H1 (cell line): ENCODE measurements at regions of chr3 and their contacts with region 1.

Region 1: DNA sequence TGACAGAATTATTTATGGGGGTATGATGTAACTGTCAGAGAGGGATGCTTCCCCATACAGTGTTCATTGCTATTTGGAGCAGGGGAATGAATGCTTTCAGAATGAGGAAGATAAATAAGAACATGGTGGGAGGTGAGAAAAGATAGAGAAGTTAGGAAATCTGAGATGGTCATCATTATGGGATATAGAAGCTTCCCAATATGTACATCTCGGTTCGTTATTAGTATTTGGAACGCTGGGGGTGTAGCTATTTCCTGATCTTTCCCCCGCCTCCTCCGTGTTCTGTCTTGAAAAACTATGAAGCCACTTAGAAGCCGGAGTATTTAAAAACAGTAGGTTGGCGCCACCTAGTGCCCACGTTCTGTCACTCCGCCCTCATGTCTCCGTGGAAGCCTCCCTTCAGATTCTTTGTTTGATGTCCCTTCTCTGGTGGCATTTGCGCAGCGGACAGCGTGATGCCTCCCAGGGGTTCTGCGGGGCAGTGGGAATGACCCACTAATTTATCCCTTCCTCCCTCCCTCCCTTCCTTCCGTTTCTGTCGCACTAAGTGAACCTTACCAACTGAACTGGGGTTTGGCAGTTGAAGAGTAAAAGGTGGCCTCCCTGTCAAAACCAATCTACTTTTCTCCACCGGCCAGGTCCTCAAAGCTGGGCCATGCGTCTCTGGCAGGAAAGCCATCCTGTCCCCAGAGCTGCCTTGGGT is 184.5 kb downstream of the FEZF2 start:
- DNase-seq: peak; percentile 41 to 82
- H3K4me3 ChIP-seq: no peak overlapping the region
- H3K27ac ChIP-seq: no peak overlapping the region
- H3K4me1 ChIP-seq: peaks cover 0 to 5% (median 3%) of the 10 kb centered on the region in 4 experiments; a peak in 4 of 7 replicates
- H3K27me3 ChIP-seq: no peaks in the 10 kb centered on the region
- CTCF ChIP-seq: peak; percentile 73 to 84 (median 75)
- EP300 ChIP-seq: no peak
- POLR2A ChIP-seq: no peak
- RAD21 ChIP-seq: peak; percentile 85 to 90

Region 2: DNA sequence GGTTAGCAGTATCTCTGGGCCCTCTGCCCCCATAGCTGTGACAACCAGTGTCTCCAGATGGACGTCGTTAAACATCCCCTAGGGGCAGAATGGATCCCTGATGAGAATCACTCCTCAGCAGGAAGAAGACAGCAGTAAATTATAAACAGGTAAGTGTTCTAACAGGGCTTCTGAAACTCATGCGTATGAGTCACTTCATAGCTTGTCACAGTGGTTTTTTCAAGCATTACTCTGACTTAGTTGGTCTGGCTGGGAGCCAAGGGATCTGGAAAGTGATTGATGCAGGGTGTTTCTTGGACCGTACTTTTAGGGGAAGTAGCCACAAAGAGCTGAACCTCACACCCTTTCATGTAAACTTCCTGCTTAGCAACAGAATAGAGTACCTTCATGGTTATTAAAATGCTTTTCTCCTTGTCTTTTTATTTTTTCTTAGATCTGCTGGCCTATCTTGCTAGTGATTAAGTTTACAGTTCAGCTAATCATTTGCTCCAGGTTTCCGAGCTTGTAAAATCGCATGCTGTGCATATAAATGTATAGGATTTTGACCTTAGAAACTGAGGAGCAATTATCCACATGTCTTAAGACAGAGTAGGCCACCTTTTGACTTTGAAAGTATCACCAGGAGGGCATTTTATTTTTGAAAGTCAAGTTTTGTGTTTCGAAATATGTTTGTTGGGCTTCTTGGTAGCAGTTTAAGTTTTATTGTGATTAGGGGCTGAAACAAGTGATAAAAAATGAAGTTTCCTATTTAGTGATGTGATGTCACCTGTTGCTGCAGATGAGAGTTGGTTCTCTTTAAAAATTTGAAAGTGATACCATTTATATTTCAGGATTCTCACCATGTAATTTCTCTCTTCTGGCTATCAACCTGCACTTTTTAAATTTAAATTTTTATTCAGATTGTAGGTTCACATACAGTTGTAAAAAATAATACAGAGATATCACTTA is 293.6 kb before region 1 on chr3:
- CTCF ChIA-PET with region 1: interaction called, 13 read pairs
- POLR2A ChIA-PET with region 1: no interaction called
- DNase-seq: no peak
- H3K4me3 ChIP-seq: no peak overlapping the region
- H3K27ac ChIP-seq: peak overlapping the region; percentile 5; the same call in 1 of the 2 replicates
- H3K4me1 ChIP-seq: peaks cover 4 to 14% (median 9%) of the 10 kb centered on the region in 4 experiments; a peak in 5 of 7 replicates
- H3K27me3 ChIP-seq: no peaks in the 10 kb centered on the region
- CTCF ChIP-seq: peak in 1 of 3 experiments; percentile 15; a peak in 2 of 4 replicates
- EP300 ChIP-seq: no peak
- POLR2A ChIP-seq: no peak
- RAD21 ChIP-seq: peak; percentile 22 to 28; a peak in 2 of 4 replicates

Region 3: DNA sequence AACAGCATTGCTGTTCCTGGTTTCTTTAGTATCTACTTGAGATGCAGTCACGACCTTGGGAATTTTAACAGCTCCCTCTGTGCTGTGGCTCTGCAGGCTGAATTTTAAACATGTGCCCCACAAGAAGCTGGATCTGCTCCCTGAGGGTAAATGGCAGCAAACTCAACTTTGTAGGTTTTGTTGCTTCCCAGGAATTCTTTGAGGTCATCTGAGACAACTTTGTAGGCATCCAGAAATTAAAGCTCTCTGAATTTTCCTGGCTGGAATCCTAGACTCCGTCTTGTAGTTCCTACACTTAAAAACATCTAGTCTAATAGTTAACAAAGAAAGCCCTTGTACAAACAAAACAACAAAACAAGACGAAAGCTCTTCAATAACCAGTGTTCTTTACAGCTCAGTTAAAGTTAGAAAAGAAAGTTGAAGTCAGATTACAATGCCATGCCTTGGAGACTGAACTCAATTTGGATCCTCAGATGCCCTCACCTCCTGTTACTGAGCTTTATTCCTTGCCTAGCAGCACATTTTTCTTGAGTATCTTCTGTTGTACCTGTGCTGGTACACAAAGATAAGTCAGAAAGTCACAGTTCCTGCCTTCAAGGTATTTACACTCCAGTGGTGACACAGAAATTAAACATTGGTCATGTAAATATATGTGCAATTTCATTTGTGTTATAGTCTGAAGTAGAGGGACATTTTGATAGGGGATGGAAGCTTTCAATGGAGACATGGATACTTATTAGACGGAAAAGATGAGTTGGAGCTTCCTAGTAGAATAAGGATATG is 181.6 kb before region 1 on chr3:
- CTCF ChIA-PET with region 1: interaction called, 10 read pairs
- POLR2A ChIA-PET with region 1: no interaction called
- DNase-seq: no peak
- H3K4me3 ChIP-seq: no peak overlapping the region
- H3K27ac ChIP-seq: no peak overlapping the region
- H3K4me1 ChIP-seq: no peaks in the 10 kb centered on the region
- H3K27me3 ChIP-seq: no peaks in the 10 kb centered on the region
- CTCF ChIP-seq: no peak
- EP300 ChIP-seq: no peak
- POLR2A ChIP-seq: no peak
- RAD21 ChIP-seq: no peak

Region 4: GRCh38 chr3:62065982-62066693 is 122.7 kb before region 1 on chr3:
- CTCF ChIA-PET with region 1: interaction called, 24 read pairs
- POLR2A ChIA-PET with region 1: no interaction called
- DNase-seq: no peak
- H3K4me3 ChIP-seq: no peak overlapping the region
- H3K27ac ChIP-seq: no peak overlapping the region
- H3K4me1 ChIP-seq: no peaks in the 10 kb centered on the region
- H3K27me3 ChIP-seq: no peaks in the 10 kb centered on the region
- CTCF ChIP-seq: no peak
- EP300 ChIP-seq: no peak
- POLR2A ChIP-seq: no peak
- RAD21 ChIP-seq: no peak

Region 5: GRCh38 chr3:62131592-62131991 is 57.2 kb before region 1 on chr3:
- CTCF ChIA-PET with region 1: interaction called, 24 read pairs
- POLR2A ChIA-PET with region 1: no interaction called
- DNase-seq: no peak
- H3K4me3 ChIP-seq: no peak overlapping the region
- H3K27ac ChIP-seq: no peak overlapping the region
- H3K4me1 ChIP-seq: peaks cover 0 to 3% (median 0%) of the 10 kb centered on the region in 4 experiments; a peak in 1 of 7 replicates
- H3K27me3 ChIP-seq: no peaks in the 10 kb centered on the region
- CTCF ChIP-seq: peak in 2 of 3 experiments; percentile 27 to 39; a peak in 2 of 4 replicates
- EP300 ChIP-seq: no peak
- POLR2A ChIP-seq: no peak
- RAD21 ChIP-seq: peak; percentile 57 to 61

Region 6: GRCh38 chr3:62169906-62170660 is 18.7 kb before region 1 on chr3:
- CTCF ChIA-PET with region 1: interaction called, 67 read pairs
- POLR2A ChIA-PET with region 1: no interaction called
- DNase-seq: no peak
- H3K4me3 ChIP-seq: no peak overlapping the region
- H3K27ac ChIP-seq: no peak overlapping the region
- H3K4me1 ChIP-seq: peaks cover 0 to 3% (median 1%) of the 10 kb centered on the region in 4 experiments; a peak in 2 of 7 replicates
- H3K27me3 ChIP-seq: no peaks in the 10 kb centered on the region
- CTCF ChIP-seq: no peak
- EP300 ChIP-seq: no peak
- POLR2A ChIP-seq: no peak
- RAD21 ChIP-seq: no peak